A673 (cell line): ENCODE measurements at regions of chr7 and their contacts with region 1.

Region 1: GRCh38 chr7:143305423-143306070 is 10.4 kb upstream of the CLCN1 start:
- DNase-seq: peak; percentile 68
- H3K4me3 ChIP-seq: no peak overlapping the region
- H3K27ac ChIP-seq: no peak overlapping the region
- H3K4me1 ChIP-seq: no peaks in the 10 kb centered on the region
- H3K27me3 ChIP-seq: no peaks in the 10 kb centered on the region
- CTCF ChIP-seq: peak; percentile 87

Region 2: GRCh38 chr7:142088022-142088714 is 1217.4 kb before region 1 on chr7:
- CTCF ChIA-PET with region 1: no interaction called
- POLR2A ChIA-PET with region 1: no interaction called
- intact Hi-C with region 1: no loop called
- DNase-seq: no peak
- H3K4me3 ChIP-seq: no peak overlapping the region
- H3K27ac ChIP-seq: no peak overlapping the region
- H3K4me1 ChIP-seq: no peaks in the 10 kb centered on the region
- H3K27me3 ChIP-seq: no peaks in the 10 kb centered on the region
- CTCF ChIP-seq: no peak

Region 3: DNA sequence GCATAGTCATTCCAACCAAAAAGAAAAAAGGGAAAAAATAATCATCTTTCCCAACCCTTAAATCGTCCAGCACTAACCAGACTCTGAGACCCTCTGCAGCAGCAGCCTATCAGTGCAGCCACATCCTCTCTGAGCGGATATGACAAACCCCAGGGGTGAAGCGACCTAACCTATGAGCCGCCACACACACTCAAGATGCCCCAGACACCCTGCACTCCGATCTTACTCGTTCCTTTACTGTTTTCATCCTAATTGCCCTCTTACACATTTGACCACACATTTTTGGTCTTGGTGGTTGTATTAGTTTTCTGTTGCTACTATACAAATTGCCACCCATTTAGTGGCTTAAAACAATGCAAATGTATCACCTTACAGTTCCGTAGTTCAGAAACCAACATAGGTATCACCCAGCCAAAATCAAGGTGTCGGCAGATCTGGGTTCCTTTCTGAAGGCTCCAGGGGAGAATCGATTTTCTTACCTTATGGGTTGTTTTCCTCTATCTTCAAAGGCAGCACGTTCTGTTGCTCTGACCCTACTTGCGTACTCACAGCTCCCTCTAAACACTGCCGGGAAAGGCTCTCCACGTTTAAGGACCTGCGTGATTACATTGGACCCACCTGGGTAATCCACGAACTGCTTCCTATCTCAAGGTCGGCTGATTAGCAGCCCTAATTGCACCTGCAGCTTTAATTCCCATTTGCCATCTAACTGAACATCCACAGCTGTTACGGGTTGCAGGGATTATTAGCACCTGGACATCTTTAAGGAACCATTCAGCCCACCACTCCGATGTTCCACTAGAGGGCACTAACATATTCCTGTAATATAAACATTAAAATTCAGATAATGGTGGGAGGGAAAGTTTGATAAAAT is 593.6 kb before region 1 on chr7:
- CTCF ChIA-PET with region 1: no interaction called
- POLR2A ChIA-PET with region 1: no interaction called
- intact Hi-C with region 1: no loop called
- DNase-seq: peak; percentile 15
- H3K4me3 ChIP-seq: no peak overlapping the region
- H3K27ac ChIP-seq: no peak overlapping the region
- H3K4me1 ChIP-seq: no peaks in the 10 kb centered on the region
- H3K27me3 ChIP-seq: peaks cover 19% of the 10 kb centered on the region
- CTCF ChIP-seq: peak; percentile 73

Region 4: DNA sequence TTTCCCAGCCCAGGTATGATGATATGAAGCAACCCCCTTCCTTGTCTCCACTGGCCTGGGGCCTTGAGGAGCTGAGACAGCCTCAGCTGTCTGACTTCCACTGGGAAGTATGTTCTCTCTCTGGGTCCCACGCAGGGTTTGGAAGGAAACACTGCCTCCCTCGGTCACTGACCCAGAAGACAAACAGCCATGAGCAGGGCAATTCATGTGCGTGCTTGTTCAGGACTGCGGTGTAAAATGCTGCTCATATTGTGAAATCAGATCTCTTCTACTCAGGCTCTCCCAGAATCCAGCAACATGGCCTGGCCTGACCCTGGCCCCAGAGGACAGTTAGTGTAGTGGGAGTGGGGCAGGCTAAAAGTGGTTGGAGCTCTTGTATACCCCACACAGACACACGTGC is 13.1 kb after region 1 on chr7:
- CTCF ChIA-PET with region 1: no interaction called
- POLR2A ChIA-PET with region 1: no interaction called
- intact Hi-C with region 1: no loop called
- DNase-seq: no peak
- H3K4me3 ChIP-seq: no peak overlapping the region
- H3K27ac ChIP-seq: no peak overlapping the region
- H3K4me1 ChIP-seq: no peaks in the 10 kb centered on the region
- H3K27me3 ChIP-seq: no peaks in the 10 kb centered on the region
- CTCF ChIP-seq: no peak

Region 5: DNA sequence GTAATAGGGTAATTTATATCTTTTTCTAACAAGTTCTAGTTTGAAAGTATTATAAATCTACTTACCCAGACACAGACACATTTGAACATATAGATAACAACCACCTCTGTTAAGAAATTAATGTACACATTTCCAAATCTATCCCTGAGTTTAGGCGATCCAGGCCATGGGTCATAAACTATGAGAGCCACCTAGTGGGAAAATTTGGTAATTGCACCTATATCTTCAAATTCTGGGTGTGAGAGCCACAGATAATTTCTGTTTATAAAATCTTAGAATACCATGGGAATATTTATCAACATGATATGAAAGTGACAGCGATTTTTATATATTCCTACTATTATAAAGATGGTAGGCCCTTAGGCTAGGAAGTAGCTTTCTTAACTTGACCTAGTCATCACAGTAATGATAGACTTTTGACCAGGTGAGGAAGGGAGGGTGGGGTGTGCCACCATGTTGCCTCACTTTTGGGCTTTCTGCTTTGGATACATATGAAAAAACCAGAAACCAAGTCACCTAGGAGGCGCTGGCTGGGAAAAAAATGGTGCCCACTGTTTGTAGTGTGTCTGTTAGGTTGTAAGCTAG is 111.1 kb after region 1 on chr7:
- CTCF ChIA-PET with region 1: no interaction called
- POLR2A ChIA-PET with region 1: no interaction called
- intact Hi-C with region 1: loop called (anchors 5 kb)
- DNase-seq: peak; percentile 65
- H3K4me3 ChIP-seq: no peak overlapping the region
- H3K27ac ChIP-seq: no peak overlapping the region
- H3K4me1 ChIP-seq: peaks cover 5% of the 10 kb centered on the region
- H3K27me3 ChIP-seq: no peaks in the 10 kb centered on the region
- CTCF ChIP-seq: peak; percentile 83

Region 6: GRCh38 chr7:143452495-143452894 is 146.9 kb after region 1 on chr7:
- CTCF ChIA-PET with region 1: no interaction called
- POLR2A ChIA-PET with region 1: no interaction called
- intact Hi-C with region 1: no loop called
- DNase-seq: no peak
- H3K4me3 ChIP-seq: no peak overlapping the region
- H3K27ac ChIP-seq: no peak overlapping the region
- H3K4me1 ChIP-seq: no peaks in the 10 kb centered on the region
- H3K27me3 ChIP-seq: no peaks in the 10 kb centered on the region
- CTCF ChIP-seq: no peak